CD4-positive, alpha-beta T cell (primary cell): ENCODE measurements at regions of chr2 and their contacts with region 1.

Region 1: DNA sequence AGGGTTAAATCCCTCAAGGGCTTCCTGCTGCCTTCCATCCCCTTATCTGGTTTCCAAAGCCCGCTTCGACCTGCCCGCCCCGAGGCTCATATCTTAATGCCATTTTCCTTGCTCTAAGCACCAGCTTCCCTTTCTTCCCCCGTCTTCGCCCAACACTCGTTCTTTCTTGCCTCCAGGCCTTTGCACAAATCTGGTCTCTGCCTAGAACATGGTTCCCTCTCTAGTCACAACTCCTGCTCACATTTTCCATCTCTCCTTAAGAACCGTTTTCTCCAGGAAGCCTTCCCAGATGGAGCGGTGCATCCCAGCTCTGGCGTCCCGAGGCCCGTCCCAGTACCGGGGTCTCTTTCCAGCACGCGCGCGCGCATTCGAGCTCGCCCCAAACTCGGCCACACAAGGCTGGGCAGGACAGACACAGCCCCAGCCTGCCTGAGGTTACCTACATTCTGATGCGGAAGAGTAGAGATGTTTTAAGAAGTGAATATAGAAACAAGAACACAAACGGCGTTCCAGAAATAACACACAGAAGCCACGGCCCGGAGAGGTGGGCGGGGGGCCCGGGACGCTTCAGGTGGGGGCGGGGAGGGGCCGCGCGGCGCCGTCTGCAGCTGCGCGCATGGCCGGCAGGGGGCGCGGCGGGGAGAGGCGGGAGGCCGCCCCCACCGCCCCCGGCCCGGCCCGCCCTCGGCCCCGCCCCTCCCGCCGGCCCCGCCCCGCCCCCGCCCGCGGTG is at the start of gene DGKD:
- DNase-seq: peak; percentile 44 to 91 (median 74)
- ATAC-seq: peak; percentile 88
- H3K4me3 ChIP-seq: peak within 1 kb of the TSS; percentile 88
- H3K4me3 Mint-ChIP-seq: peak within 1 kb of the TSS; percentile 95
- H3K27ac ChIP-seq: peak within 1 kb of the TSS in 1 of 2 donors; percentile 40
- H3K27ac Mint-ChIP-seq: peak within 1 kb of the TSS; percentile 76
- H3K4me1 ChIP-seq: peaks cover 48% of the 10 kb centered on the region
- H3K4me1 Mint-ChIP-seq: peaks cover 74% of the 10 kb centered on the region
- H3K27me3 ChIP-seq: no peaks in the 10 kb centered on the region
- H3K27me3 Mint-ChIP-seq: no peaks in the 10 kb centered on the region
- CTCF ChIP-seq: no peak
- total RNA-seq, gene DGKD: 147 to 156 TPM

Region 2: DNA sequence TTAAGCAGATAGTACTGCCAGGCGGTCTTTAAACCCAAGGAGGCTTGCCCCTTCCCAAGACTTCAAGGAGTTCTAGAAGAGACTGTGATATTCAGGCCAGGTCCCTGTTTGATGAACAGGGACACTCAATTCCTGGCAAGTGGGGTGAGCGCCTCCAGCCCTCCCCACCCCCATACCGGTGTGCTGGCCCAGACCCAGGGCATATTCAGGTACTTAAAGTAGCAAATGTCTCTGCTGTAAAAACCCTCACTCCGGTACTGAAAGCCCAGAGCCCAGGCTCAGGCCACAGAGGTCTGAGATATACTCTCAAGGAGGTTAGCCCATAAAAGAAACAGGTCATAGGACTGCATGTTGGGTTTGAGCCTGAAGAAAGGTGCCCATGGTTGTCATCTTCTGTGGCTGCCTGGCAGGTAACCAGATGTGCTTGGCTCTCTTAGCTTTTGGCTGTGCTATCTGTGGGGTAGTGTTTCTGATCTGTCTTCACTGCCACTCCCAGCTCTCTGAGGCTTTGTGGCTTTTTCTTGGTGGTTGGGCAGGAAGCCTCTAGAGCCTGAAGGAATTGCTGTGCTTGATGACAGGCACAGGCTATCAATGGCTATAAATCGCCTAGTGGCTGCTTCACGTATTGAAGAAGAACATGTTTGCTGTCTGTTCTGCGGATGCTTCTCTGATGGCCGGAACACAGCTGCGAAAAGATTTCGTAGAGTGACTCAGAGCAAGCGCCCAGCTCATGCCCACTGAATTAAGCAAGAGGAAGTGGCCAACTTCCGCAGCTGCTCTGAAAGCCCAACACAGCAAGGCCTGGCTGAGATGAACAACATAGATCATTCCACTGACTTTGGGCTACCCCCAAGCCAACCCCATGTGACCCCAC is 1038.6 kb before region 1 on chr2:
- CTCF ChIA-PET with region 1: no interaction called
- POLR2A ChIA-PET with region 1: no interaction called
- intact Hi-C with region 1: loop called in 1 of 2 experiments (anchors 10 kb)
- DNase-seq: peak; percentile 44 to 92 (median 67)
- ATAC-seq: peak; percentile 87
- H3K4me3 ChIP-seq: peak overlapping the region; percentile 19
- H3K4me3 Mint-ChIP-seq: peak overlapping the region; percentile 80
- H3K27ac ChIP-seq: peak overlapping the region; percentile 62
- H3K27ac Mint-ChIP-seq: peak overlapping the region; percentile 90
- H3K4me1 ChIP-seq: peaks cover 80% of the 10 kb centered on the region
- H3K4me1 Mint-ChIP-seq: peaks cover 92% of the 10 kb centered on the region
- H3K27me3 ChIP-seq: no peaks in the 10 kb centered on the region
- H3K27me3 Mint-ChIP-seq: no peaks in the 10 kb centered on the region
- CTCF ChIP-seq: peak; percentile 47

Region 3: DNA sequence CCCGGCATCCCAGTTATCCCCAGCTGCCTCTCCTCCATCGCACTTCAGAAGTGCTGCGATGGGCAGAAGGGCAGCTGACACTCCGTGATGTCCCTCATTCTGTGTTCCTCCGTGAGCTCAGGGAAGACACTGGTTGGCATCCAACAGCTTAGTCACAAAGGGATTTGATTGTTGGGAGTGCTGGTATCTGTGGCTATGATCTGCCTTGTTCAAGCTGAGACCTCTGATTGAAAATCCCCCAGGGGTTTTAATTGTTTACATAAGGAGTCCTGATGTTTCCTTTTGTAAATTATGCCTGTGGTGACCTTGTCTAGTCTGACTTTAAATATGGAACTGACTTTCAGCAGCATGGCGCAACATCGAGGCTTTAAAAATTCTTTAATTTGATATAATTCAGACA is 65.2 kb before region 1 on chr2:
- CTCF ChIA-PET with region 1: no interaction called
- POLR2A ChIA-PET with region 1: no interaction called
- intact Hi-C with region 1: loop called in 1 of 2 experiments (anchors 5 kb)
- DNase-seq: no peak
- ATAC-seq: no peak
- H3K4me3 ChIP-seq: no peak overlapping the region
- H3K4me3 Mint-ChIP-seq: no peak overlapping the region
- H3K27ac ChIP-seq: no peak overlapping the region
- H3K27ac Mint-ChIP-seq: peak overlapping the region; percentile 42
- H3K4me1 ChIP-seq: no peaks in the 10 kb centered on the region
- H3K4me1 Mint-ChIP-seq: peaks cover 10% of the 10 kb centered on the region
- H3K27me3 ChIP-seq: no peaks in the 10 kb centered on the region
- H3K27me3 Mint-ChIP-seq: no peaks in the 10 kb centered on the region
- CTCF ChIP-seq: no peak

Region 4: GRCh38 chr2:233331536-233331935 is 22.4 kb before region 1 on chr2:
- CTCF ChIA-PET with region 1: interaction called, 6 read pairs
- POLR2A ChIA-PET with region 1: interaction called, 25 read pairs
- intact Hi-C with region 1: loop called in 1 of 2 experiments (anchors 1 kb)
- DNase-seq: peak; percentile 60 to 94 (median 73)
- ATAC-seq: peak; percentile 96
- H3K4me3 ChIP-seq: peak overlapping the region; percentile 5
- H3K4me3 Mint-ChIP-seq: peak overlapping the region; percentile 78
- H3K27ac ChIP-seq: peak overlapping the region; percentile 80 to 86
- H3K27ac Mint-ChIP-seq: peak overlapping the region; percentile 93
- H3K4me1 ChIP-seq: peaks cover 63% of the 10 kb centered on the region
- H3K4me1 Mint-ChIP-seq: peaks cover 57% of the 10 kb centered on the region
- H3K27me3 ChIP-seq: no peaks in the 10 kb centered on the region
- H3K27me3 Mint-ChIP-seq: no peaks in the 10 kb centered on the region
- CTCF ChIP-seq: no peak

Region 5: GRCh38 chr2:233385489-233386044 is 31.6 kb after region 1 on chr2:
- CTCF ChIA-PET with region 1: no interaction called
- POLR2A ChIA-PET with region 1: interaction called, 10 read pairs
- intact Hi-C with region 1: no loop called
- DNase-seq: peak in 8 of 14 experiments; percentile 37 to 62 (median 54)
- ATAC-seq: peak; percentile 72
- H3K4me3 ChIP-seq: no peak overlapping the region
- H3K4me3 Mint-ChIP-seq: peak overlapping the region; percentile 81
- H3K27ac ChIP-seq: peak overlapping the region; percentile 40 to 52
- H3K27ac Mint-ChIP-seq: peak overlapping the region; percentile 90
- H3K4me1 ChIP-seq: peaks cover 55% of the 10 kb centered on the region
- H3K4me1 Mint-ChIP-seq: peaks cover 71% of the 10 kb centered on the region
- H3K27me3 ChIP-seq: no peaks in the 10 kb centered on the region
- H3K27me3 Mint-ChIP-seq: no peaks in the 10 kb centered on the region
- CTCF ChIP-seq: no peak